Kidney (tissue), 22 donors: ENCODE measurements at regions of chr1 and their contacts with region 1.

Region 1: DNA sequence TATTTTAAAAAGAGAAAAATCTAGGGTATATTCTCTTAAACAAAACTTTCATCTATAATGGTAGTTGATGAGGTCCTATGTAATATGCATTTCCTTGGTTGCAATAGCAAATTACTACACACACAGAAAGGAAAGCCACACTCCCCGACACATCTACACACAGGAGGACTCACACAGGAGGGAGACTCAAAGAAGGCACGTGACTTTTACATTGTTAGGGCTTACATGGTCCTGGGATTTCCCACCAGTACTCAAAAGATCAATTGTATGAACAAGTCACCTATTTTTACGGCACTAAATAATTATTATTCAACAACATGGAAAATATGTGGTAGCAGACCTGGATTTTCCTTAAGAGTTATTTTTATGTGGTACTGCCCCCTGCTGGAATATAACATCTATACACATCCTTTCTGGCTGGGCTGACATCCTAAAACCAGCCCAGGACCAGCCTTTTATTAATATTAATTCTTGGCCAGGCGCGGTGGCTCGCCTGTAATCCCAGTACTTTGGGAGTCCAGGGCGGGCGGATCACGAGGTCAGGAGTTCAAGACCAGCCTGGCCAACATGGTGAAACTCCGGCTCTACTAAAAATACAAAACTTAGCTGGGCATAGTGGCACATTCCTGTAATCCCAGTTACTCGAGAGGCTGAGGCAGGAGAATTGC is 33.9 kb upstream of the LGALS8 start:
- DNase-seq: peak in 2 of 5 donors; percentile 48 to 78
- H3K4me3 ChIP-seq: no peak overlapping the region
- H3K27ac ChIP-seq: no peak overlapping the region
- H3K4me1 ChIP-seq: no peaks in the 10 kb centered on the region
- H3K27me3 ChIP-seq: no peaks in the 10 kb centered on the region
- CTCF ChIP-seq: peak; percentile 56

Region 2: DNA sequence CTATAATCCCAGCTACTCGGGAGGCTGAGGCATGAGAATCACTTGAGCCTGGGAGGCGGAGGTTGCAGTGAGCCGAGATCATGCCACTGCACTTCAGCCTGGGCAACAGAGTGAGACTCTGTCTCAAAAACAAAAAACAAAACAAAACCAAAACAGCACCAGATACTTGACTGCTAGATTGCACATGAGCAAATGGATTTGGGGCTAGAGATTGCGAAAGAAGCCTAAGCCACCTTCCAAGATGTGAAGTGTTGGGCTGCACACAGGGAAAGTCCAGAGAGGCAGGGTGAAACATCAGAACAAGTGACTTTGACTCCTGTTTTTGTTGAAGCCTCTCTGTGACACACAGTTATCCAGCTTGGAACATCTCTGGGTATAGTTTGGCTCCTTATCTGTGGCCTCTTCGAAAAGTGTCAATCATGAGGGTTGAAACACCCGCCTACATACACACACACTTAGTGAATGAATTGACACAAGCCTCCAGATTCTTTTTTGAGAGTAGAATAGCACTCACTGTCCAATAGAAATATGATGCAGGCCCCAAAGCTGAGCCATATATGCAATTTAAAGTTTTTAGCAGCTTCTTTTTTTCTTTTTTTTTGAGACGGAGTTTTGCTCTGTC is 381.7 kb before region 1 on chr1:
- intact Hi-C with region 1: loop called (anchors 5 kb)
- DNase-seq: no peak
- H3K4me3 ChIP-seq: no peak overlapping the region
- H3K27ac ChIP-seq: no peak overlapping the region
- H3K4me1 ChIP-seq: no peaks in the 10 kb centered on the region
- H3K27me3 ChIP-seq: no peaks in the 10 kb centered on the region
- CTCF ChIP-seq: no peak